ENCODE measurements at regions of chr1 and their contacts with region 1.

Region 1: GRCh38 chr1:43509723-43510375 is 20.8 kb upstream of the PTPRF start:
- DNase-seq: peak; percentile 76 to 91
- H3K4me3 ChIP-seq: peak overlapping the region; percentile 37; the same call in 1 of the 2 replicates
- H3K27ac ChIP-seq: peak overlapping the region; percentile 95
- H3K4me1 ChIP-seq: peaks cover 35% of the 10 kb centered on the region
- H3K27me3 ChIP-seq: no peaks in the 10 kb centered on the region
- CTCF ChIP-seq: no peak

Region 2: GRCh38 chr1:43473463-43473862 is 36.4 kb before region 1 on chr1:
- CTCF ChIA-PET with region 1: no interaction called
- POLR2A ChIA-PET with region 1: no interaction called
- intact Hi-C with region 1: loop called (anchors 1 kb)
- DNase-seq: no peak
- H3K4me3 ChIP-seq: no peak overlapping the region
- H3K27ac ChIP-seq: peak overlapping the region; percentile 68
- H3K4me1 ChIP-seq: peaks cover 68% of the 10 kb centered on the region
- H3K27me3 ChIP-seq: no peaks in the 10 kb centered on the region
- CTCF ChIP-seq: no peak

Region 3: GRCh38 chr1:43493661-43494450 is 16.0 kb before region 1 on chr1:
- CTCF ChIA-PET with region 1: no interaction called
- POLR2A ChIA-PET with region 1: no interaction called
- intact Hi-C with region 1: loop called (anchors 2 kb)
- DNase-seq: no peak
- H3K4me3 ChIP-seq: no peak overlapping the region
- H3K27ac ChIP-seq: no peak overlapping the region
- H3K4me1 ChIP-seq: 0 out of 2 replicates have a peak, but pooled peaks cover 8% of the 10 kb centered on the region
- H3K27me3 ChIP-seq: no peaks in the 10 kb centered on the region
- CTCF ChIP-seq: no peak

Region 4: DNA sequence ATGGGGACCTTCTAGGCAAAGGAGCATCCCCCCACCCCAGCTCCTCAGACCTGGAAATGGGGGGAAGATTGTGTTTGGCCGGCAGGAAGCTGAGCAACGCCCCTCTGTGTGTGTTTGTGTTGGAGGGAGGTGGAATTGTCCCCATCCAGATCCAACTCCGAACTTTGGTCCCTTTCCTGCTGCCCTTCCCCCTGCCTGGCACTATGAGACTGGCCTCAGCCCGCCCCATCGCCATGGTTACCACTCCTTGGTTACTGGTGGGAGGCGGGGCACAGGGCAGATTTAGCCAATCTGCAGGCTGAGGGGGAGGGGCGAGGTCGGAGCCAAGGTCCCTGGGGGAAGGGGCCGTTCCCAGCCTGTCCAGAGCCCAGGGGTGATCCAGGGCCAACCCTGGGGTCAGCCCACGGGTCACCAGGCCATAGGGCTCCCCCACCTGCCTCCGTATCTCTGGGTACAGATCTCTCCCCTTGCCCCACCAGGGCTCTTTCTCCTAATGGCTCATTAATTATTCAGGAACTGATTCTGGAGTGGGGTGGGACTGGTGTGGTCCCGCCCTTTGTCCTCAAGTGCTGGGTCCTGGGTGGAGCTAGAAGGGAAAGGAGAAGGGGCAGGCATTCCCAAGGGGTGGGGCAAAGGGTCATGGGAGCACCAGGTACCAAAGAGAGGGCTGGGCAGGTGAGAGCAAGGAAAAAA is 36.0 kb after region 1 on chr1:
- CTCF ChIA-PET with region 1: no interaction called
- POLR2A ChIA-PET with region 1: no interaction called
- intact Hi-C with region 1: no loop called
- DNase-seq: peak in 1 of 2 experiments; percentile 37
- H3K4me3 ChIP-seq: no peak overlapping the region
- H3K27ac ChIP-seq: no peak overlapping the region
- H3K4me1 ChIP-seq: peaks cover 57% of the 10 kb centered on the region
- H3K27me3 ChIP-seq: no peaks in the 10 kb centered on the region
- CTCF ChIP-seq: no peak

Region 5: GRCh38 chr1:44275991-44276405 is 766.1 kb after region 1 on chr1:
- CTCF ChIA-PET with region 1: no interaction called
- POLR2A ChIA-PET with region 1: no interaction called
- intact Hi-C with region 1: no loop called
- DNase-seq: no peak
- H3K4me3 ChIP-seq: no peak overlapping the region
- H3K27ac ChIP-seq: no peak overlapping the region
- H3K4me1 ChIP-seq: no peaks in the 10 kb centered on the region
- H3K27me3 ChIP-seq: no peaks in the 10 kb centered on the region
- CTCF ChIP-seq: no peak